Naive thymus-derived CD4-positive, alpha-beta T cell (primary cell): ENCODE measurements at regions of chr1 and their contacts with region 1.

Region 1: GRCh38 chr1:221741711-221742554 is at the start of gene DUSP10:
- DNase-seq: peak; percentile 88 to 100 (median 99)
- ATAC-seq: peak; percentile 91
- H3K4me3 ChIP-seq: peak within 1 kb of the TSS; percentile 85
- H3K4me3 Mint-ChIP-seq: peak within 1 kb of the TSS in 1 of 10 donors; percentile 33
- H3K27ac ChIP-seq: peak within 1 kb of the TSS; percentile 94
- H3K27ac Mint-ChIP-seq: peak within 1 kb of the TSS in 3 of 9 donors; percentile 39 to 83 (median 50)
- H3K4me1 ChIP-seq: peaks cover 9 to 17% of the 10 kb centered on the region in 2 donors
- H3K4me1 Mint-ChIP-seq: peaks cover 0 to 32% (median 21%) of the 10 kb centered on the region in 7 donors
- H3K27me3 ChIP-seq: no peaks in the 10 kb centered on the region
- H3K27me3 Mint-ChIP-seq: no peaks in the 10 kb centered on the region
- total RNA-seq, gene DUSP10: 2.5 to 60.6 (median 19.0) TPM

Region 2: DNA sequence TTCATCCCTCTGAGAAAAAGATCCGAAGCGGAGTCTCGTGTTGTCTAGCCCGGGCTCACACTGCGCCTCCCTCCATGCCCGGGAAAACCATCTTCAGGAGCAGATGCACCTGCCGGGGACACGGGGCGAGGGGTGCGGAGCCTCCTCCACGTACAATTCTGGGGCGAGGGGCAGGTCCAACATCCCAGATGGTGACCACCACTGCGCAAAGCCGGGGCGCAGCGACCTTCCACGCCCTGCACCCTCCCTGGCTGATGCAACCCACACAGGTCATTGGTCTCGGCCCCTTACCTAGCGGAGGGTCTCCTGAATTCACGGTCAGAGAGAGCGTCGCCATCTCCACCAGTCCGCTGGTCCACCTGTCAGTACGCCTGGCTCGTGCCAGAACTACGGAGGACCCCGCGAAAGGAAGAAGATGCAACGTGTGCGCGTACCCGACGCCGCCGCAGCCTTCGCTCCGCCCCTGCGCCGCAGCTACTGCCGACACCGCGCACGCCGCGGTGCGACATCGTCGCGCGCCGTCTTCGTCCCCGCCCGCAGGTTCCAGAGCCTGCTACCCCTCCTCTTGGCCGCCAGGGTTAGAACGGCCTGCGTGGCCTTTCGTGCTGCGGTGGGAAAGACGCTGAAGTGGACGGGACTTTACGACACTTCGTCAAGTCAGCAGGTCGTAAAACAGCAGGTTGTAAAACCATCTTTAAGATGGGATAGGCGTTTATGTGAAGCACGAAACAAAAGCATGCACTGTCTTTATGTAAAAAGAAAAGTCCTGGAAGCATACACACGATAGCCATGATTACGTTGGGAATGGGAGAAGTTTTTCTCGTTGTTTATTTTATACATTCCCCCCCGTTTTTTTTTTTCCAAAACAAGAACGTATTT is 1695.6 kb before region 1 on chr1 and contains the start of gene EPRS1:
- CTCF ChIA-PET with region 1: no interaction called
- POLR2A ChIA-PET with region 1: no interaction called
- intact Hi-C with region 1: loop called in 1 of 2 experiments (anchors 10 kb)
- DNase-seq: peak; percentile 83 to 97 (median 95)
- ATAC-seq: peak; percentile 99
- H3K4me3 ChIP-seq: peak within 1 kb of the TSS; percentile 92
- H3K4me3 Mint-ChIP-seq: peak within 1 kb of the TSS; percentile 88 to 99 (median 93)
- H3K27ac ChIP-seq: peak within 1 kb of the TSS; percentile 86
- H3K27ac Mint-ChIP-seq: peak within 1 kb of the TSS; percentile 80 to 99 (median 94)
- H3K4me1 ChIP-seq: peaks cover 0 to 23% of the 10 kb centered on the region in 2 donors
- H3K4me1 Mint-ChIP-seq: peaks cover 8 to 48% (median 34%) of the 10 kb centered on the region in 7 donors
- H3K27me3 ChIP-seq: no peaks in the 10 kb centered on the region
- H3K27me3 Mint-ChIP-seq: peaks cover 0 to 3% (median 0%) of the 10 kb centered on the region in 5 donors
- total RNA-seq, gene EPRS1: 39.2 to 130 (median 93.6) TPM

Region 3: DNA sequence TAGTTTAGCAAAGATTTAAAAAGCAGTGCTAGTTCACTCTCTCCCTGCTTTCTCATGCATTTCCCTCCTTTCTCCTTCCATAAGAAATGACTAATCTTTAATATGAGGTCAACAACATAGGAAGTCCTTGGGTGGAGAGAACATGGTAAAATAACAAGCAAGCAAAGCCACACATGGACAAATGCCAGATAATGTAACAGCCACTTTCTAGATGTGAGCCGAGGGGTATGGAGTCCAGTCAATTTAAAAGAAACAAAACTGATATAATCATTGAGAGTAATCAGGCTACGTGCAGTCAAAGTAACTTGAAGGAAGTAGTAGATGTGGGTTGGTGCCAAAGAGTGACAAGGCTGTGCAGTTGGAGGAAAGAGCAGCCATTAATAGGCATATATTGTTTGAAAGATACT is 69.7 kb before region 1 on chr1:
- CTCF ChIA-PET with region 1: no interaction called
- POLR2A ChIA-PET with region 1: no interaction called
- intact Hi-C with region 1: loop called in 1 of 2 experiments (anchors 5 kb)
- DNase-seq: no peak
- ATAC-seq: no peak
- H3K4me3 ChIP-seq: no peak overlapping the region
- H3K4me3 Mint-ChIP-seq: no peak overlapping the region
- H3K27ac ChIP-seq: no peak overlapping the region
- H3K27ac Mint-ChIP-seq: no peak overlapping the region
- H3K4me1 ChIP-seq: no peaks in the 10 kb centered on the region
- H3K4me1 Mint-ChIP-seq: no peaks in the 10 kb centered on the region
- H3K27me3 ChIP-seq: no peaks in the 10 kb centered on the region
- H3K27me3 Mint-ChIP-seq: peaks cover 0 to 17% (median 10%) of the 10 kb centered on the region in 5 donors

Region 4: DNA sequence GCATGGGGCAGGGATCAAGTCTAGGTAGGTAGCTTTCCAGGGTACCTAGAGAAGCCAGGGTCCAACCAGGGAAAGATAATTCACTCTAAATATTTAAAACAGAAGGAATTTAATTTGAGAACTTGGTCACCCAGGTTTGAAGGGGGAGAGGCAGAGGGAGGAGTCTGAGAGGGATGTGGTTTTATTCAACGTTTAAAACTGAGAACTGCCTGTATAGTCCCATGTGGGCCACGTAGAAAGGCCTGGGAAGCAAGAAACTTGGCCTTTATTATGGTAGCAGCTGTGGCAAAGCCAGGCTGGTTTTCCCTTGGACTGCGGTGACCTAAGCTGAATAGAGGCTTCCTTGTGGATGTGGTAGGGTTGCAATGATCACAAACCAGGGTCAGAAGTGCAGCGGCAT is 42.0 kb after region 1 on chr1:
- CTCF ChIA-PET with region 1: interaction called, 3 read pairs
- POLR2A ChIA-PET with region 1: interaction called, 14 read pairs
- intact Hi-C with region 1: loop called in 1 of 2 experiments (anchors 1 kb)
- DNase-seq: peak in 6 of 9 donors; percentile 12 to 49 (median 34)
- ATAC-seq: peak; percentile 82
- H3K4me3 ChIP-seq: peak overlapping the region; percentile 41
- H3K4me3 Mint-ChIP-seq: peak overlapping the region; percentile 41 to 76 (median 69)
- H3K27ac ChIP-seq: no peak overlapping the region
- H3K27ac Mint-ChIP-seq: peak overlapping the region in 5 of 9 donors; percentile 17 to 54 (median 29)
- H3K4me1 ChIP-seq: peaks cover 34% of the 10 kb centered on the region in 2 donors
- H3K4me1 Mint-ChIP-seq: peaks cover 36 to 62% (median 45%) of the 10 kb centered on the region in 7 donors
- H3K27me3 ChIP-seq: no peaks in the 10 kb centered on the region
- H3K27me3 Mint-ChIP-seq: no peaks in the 10 kb centered on the region

Region 5: DNA sequence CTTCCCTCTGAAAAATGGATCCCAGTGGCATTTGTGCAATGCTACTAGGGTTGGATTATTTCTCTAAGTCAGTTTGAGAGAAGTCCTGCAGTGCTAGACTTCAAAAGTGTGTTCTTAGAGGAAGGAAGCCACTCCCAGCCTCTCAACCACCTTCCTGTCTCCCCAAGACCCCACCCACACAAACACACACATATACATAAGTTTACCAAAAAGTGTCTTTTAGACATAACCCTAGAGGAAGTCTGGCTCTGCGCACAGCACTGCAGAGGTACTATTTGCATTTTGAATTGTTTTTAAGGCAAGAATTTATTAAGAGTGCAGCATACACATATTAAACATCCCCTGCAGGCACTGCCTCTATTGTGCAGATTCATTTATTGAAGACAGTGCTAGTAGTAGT is 678.7 kb after region 1 on chr1:
- CTCF ChIA-PET with region 1: no interaction called
- POLR2A ChIA-PET with region 1: no interaction called
- intact Hi-C with region 1: loop called in 1 of 2 experiments (anchors 5 kb)
- DNase-seq: peak in 7 of 9 donors; percentile 62 to 84 (median 79)
- ATAC-seq: peak; percentile 93
- H3K4me3 ChIP-seq: peak overlapping the region; percentile 44
- H3K4me3 Mint-ChIP-seq: peak overlapping the region; percentile 50 to 83 (median 76)
- H3K27ac ChIP-seq: peak overlapping the region; percentile 50
- H3K27ac Mint-ChIP-seq: peak overlapping the region; percentile 85 to 99 (median 95)
- H3K4me1 ChIP-seq: peaks cover 36 to 62% of the 10 kb centered on the region in 2 donors
- H3K4me1 Mint-ChIP-seq: peaks cover 35 to 92% (median 80%) of the 10 kb centered on the region in 7 donors
- H3K27me3 ChIP-seq: no peaks in the 10 kb centered on the region
- H3K27me3 Mint-ChIP-seq: no peaks in the 10 kb centered on the region

Region 6: DNA sequence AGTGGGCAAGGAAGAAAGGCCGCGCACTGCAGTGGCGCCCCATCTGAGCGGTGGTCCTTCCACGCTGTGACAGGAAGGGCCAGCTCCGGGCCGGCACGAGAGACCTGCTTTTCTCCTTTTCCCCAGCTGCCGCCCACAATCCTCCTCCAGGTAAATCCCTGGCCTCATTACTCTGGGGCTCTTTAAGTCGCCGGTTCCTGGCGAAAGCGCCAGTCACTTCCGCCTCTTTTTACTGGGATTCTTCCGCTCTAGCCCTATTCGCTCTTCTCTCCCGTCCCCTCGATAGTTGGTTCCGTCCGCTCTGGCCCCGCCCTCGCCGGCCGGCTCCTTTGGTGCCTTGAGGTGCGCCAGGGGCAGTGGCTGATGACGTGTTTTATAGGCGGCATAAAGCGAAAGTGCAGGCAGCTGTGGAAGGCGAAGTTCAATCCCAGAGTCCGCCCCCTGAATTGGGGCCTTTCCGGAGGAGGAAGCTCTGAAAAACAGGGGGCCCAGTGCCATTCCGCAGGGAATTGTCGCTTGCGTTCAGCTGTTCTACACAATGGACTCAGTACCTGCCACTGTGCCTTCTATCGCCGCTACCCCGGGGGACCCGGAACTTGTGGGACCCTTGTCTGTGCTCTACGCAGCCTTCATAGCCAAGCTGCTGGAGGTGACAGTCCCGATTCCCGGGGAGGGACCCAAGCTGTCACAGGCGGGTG is 902.2 kb after region 1 on chr1:
- CTCF ChIA-PET with region 1: no interaction called
- POLR2A ChIA-PET with region 1: interaction called, 8 read pairs
- intact Hi-C with region 1: loop called (anchors 2 to 10 kb)
- DNase-seq: peak; percentile 93 to 98 (median 96)
- ATAC-seq: peak; percentile 97
- H3K4me3 ChIP-seq: peak overlapping the region; percentile 99
- H3K4me3 Mint-ChIP-seq: peak overlapping the region; percentile 87 to 99 (median 97)
- H3K27ac ChIP-seq: peak overlapping the region; percentile 92
- H3K27ac Mint-ChIP-seq: peak overlapping the region; percentile 95 to 99 (median 98)
- H3K4me1 ChIP-seq: peaks cover 12% of the 10 kb centered on the region in 2 donors
- H3K4me1 Mint-ChIP-seq: peaks cover 12 to 59% (median 49%) of the 10 kb centered on the region in 7 donors
- H3K27me3 ChIP-seq: no peaks in the 10 kb centered on the region
- H3K27me3 Mint-ChIP-seq: no peaks in the 10 kb centered on the region